B cell (primary cell): ENCODE measurements at regions of chr11 and their contacts with region 1.

Region 1: GRCh38 chr11:59207988-59208451 is 4.7 kb downstream of the MPEG1 start:
- DNase-seq: peak; percentile 84
- ATAC-seq: peak; percentile 68
- H3K4me3 ChIP-seq: peak overlapping the region; percentile 49 to 91 (median 73)
- H3K4me3 Mint-ChIP-seq: peak overlapping the region; percentile 95
- H3K27ac ChIP-seq: peak overlapping the region; percentile 64 to 89
- H3K27ac Mint-ChIP-seq: peak overlapping the region; percentile 95
- H3K4me1 ChIP-seq: peaks cover 61 to 68% of the 10 kb centered on the region in 2 donors
- H3K4me1 Mint-ChIP-seq: peaks cover 93% of the 10 kb centered on the region
- H3K27me3 ChIP-seq: no peaks in the 10 kb centered on the region
- H3K27me3 Mint-ChIP-seq: no peaks in the 10 kb centered on the region
- CTCF ChIP-seq: peak; percentile 82

Region 2: DNA sequence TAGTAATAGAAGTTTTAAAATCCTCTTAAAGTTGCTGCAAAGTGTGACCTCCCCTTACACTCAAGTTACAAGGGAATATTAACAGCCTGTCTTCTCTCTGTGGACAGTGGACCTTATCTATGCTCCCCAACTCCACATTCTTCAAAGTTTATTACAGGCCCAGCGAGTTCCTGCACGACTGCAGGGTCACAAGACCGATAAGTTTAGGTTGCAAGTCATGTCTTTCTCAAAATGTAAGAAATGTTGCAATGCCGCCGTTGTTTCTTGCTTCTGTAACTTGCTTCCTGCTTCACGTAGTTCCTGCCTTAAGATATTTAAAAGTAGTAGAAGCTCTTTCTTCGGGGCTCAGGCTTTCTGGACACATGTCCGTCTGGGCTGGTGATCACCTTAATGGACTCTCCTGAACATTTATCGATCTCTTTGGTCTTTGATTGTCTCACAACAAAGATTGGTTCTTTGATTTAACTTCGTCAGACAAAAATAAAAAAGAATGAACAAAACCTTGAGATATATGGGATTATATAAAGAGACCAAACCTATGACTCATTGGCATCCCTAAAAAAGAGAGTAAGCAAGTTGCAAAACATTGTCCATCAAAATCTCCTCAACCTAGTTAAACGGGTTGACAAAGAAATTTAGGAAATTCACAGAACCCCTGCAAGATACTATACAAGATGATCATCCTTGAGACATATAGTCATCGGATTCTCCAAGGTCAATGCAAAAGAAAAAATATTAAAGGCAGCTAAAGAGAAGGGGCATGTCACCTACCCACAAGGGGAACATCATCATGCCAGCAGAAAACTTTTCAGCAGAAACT is 430.9 kb before region 1 on chr11:
- CTCF ChIA-PET with region 1: no interaction called
- POLR2A ChIA-PET with region 1: no interaction called
- intact Hi-C with region 1: no loop called
- DNase-seq: no peak
- ATAC-seq: no peak
- H3K4me3 ChIP-seq: no peak overlapping the region
- H3K4me3 Mint-ChIP-seq: no peak overlapping the region
- H3K27ac ChIP-seq: no peak overlapping the region
- H3K27ac Mint-ChIP-seq: no peak overlapping the region
- H3K4me1 ChIP-seq: no peaks in the 10 kb centered on the region
- H3K4me1 Mint-ChIP-seq: no peaks in the 10 kb centered on the region
- H3K27me3 ChIP-seq: no peaks in the 10 kb centered on the region
- H3K27me3 Mint-ChIP-seq: peaks cover 14% of the 10 kb centered on the region
- CTCF ChIP-seq: no peak

Region 3: DNA sequence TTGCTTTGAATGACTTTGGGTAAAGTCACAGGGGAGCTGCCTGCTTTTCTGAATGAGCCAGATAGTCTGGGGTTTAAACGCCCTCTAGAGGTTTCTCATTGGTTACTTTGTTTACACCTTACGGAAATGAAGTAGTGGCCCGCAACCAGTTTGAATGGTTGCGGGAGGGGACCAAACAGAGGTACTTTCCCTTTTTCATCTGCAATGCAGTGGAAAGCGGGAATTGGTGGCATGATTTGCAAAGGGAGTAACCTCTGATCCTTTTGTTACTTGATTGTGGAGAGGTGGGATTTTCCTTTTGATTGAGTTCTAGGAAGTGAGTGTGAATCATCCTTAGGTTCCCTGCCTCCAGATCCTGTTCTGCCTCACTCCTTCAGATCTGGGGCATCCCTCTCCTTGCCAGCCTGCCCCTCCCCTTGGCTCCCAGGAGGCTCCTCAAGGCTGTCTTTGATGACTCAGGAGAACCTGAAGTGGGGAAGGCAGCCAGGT is 284.7 kb before region 1 on chr11:
- CTCF ChIA-PET with region 1: no interaction called
- POLR2A ChIA-PET with region 1: no interaction called
- intact Hi-C with region 1: no loop called
- DNase-seq: peak; percentile 51
- ATAC-seq: peak; percentile 76
- H3K4me3 ChIP-seq: no peak overlapping the region
- H3K4me3 Mint-ChIP-seq: peak overlapping the region; percentile 38
- H3K27ac ChIP-seq: no peak overlapping the region
- H3K27ac Mint-ChIP-seq: no peak overlapping the region
- H3K4me1 ChIP-seq: peaks cover 18 to 19% of the 10 kb centered on the region in 2 donors
- H3K4me1 Mint-ChIP-seq: peaks cover 22% of the 10 kb centered on the region
- H3K27me3 ChIP-seq: peaks cover 0 to 6% (median 3%) of the 10 kb centered on the region in 4 experiments
- H3K27me3 Mint-ChIP-seq: peaks cover 8% of the 10 kb centered on the region
- CTCF ChIP-seq: peak; percentile 52

Region 4: GRCh38 chr11:59112494-59112893 is 95.5 kb before region 1 on chr11:
- CTCF ChIA-PET with region 1: no interaction called
- POLR2A ChIA-PET with region 1: no interaction called
- intact Hi-C with region 1: no loop called
- DNase-seq: no peak
- ATAC-seq: no peak
- H3K4me3 ChIP-seq: no peak overlapping the region
- H3K4me3 Mint-ChIP-seq: no peak overlapping the region
- H3K27ac ChIP-seq: no peak overlapping the region
- H3K27ac Mint-ChIP-seq: no peak overlapping the region
- H3K4me1 ChIP-seq: peaks cover 19 to 21% of the 10 kb centered on the region in 2 donors
- H3K4me1 Mint-ChIP-seq: peaks cover 41% of the 10 kb centered on the region
- H3K27me3 ChIP-seq: no peaks in the 10 kb centered on the region
- H3K27me3 Mint-ChIP-seq: no peaks in the 10 kb centered on the region
- CTCF ChIP-seq: no peak

Region 5: DNA sequence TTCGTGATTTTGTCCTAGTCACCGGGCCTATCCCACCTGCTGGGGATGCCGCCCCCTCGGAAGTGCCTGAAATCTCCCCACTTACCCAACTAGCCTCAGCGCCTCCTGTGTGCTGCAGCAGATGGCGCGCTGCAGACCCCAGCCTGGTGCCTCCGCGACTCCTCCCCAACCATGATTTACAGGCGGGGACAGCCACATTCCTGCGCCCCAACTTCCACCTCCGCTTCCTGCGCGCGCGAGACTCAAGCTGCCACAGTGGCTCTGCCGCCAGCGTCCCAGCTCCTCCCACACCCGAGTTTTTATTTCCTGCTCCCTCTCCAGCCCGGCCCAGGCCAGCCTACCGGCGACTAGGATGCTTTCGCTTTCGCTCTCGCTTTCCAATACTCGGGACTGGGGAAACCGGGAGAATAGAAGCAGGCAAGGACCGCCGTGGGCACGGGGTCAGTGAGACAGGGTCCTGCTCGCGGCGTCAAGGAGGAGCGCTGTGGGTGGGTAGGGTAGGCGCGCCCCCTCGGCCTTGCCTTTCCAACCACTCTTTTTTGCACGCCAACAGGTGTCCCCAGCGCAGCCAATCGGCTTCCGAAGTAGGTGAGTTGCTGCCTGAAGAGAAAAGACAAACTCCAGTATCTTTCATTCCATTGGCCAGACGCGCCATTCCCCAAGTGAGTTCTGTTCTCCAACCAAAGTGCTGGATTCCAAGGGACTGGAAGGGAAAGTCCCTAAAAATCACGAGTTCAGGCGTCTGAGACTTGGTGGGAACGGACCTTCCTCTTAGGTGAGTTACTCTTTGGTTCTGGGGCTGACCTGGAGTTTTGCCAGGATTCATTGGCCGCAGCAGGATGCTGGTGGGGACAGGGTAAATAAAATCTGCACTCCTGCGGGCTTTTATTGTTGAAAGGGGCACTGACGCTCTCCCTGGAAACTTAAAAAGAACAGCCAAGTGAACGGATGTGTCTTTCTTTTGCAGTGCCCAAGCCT is 65.2 kb before region 1 on chr11 and contains the start of gene FAM111A:
- CTCF ChIA-PET with region 1: interaction called, 3 read pairs
- POLR2A ChIA-PET with region 1: no interaction called
- intact Hi-C with region 1: loop called (anchors 2 kb)
- DNase-seq: peak; percentile 91
- ATAC-seq: peak; percentile 74
- H3K4me3 ChIP-seq: peak within 1 kb of the TSS; percentile 82 to 94 (median 89)
- H3K4me3 Mint-ChIP-seq: peak within 1 kb of the TSS; percentile 97
- H3K27ac ChIP-seq: peak within 1 kb of the TSS; percentile 88 to 90
- H3K27ac Mint-ChIP-seq: peak within 1 kb of the TSS; percentile 87
- H3K4me1 ChIP-seq: peaks cover 40 to 45% of the 10 kb centered on the region in 2 donors
- H3K4me1 Mint-ChIP-seq: peaks cover 68% of the 10 kb centered on the region
- H3K27me3 ChIP-seq: no peaks in the 10 kb centered on the region
- H3K27me3 Mint-ChIP-seq: no peaks in the 10 kb centered on the region
- CTCF ChIP-seq: no peak
- total RNA-seq, gene FAM111A: 120 and 126 TPM in 2 replicates

Region 6: DNA sequence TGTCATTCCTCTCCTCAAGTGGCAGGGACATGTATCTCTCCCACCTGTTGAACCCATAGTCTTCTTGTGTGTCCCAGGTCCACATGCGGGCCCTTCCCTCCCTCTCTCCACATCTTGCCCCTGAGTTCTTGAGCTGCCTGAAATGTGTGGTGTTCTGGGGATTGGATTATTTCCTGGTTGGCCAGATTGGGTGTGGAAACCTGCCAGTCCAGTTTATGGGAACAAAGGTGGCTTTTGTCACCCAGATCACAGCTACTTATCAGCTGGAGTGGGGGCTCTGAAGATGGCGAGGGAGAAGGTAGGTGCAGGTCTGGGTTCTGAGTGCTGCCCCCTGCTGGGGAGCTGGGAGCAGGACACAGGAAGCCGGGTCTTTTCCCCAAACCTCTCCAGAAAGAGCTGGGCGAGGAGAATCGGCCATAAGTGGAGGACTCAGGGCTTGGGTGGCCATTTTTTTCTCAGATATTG is 21.9 kb before region 1 on chr11:
- CTCF ChIA-PET with region 1: interaction called, 52 read pairs
- POLR2A ChIA-PET with region 1: no interaction called
- intact Hi-C with region 1: no loop called
- DNase-seq: peak; percentile 68
- ATAC-seq: peak; percentile 59
- H3K4me3 ChIP-seq: no peak overlapping the region
- H3K4me3 Mint-ChIP-seq: no peak overlapping the region
- H3K27ac ChIP-seq: no peak overlapping the region
- H3K27ac Mint-ChIP-seq: no peak overlapping the region
- H3K4me1 ChIP-seq: peaks cover 0 to 2% of the 10 kb centered on the region in 2 donors
- H3K4me1 Mint-ChIP-seq: peaks cover 20% of the 10 kb centered on the region
- H3K27me3 ChIP-seq: no peaks in the 10 kb centered on the region
- H3K27me3 Mint-ChIP-seq: no peaks in the 10 kb centered on the region
- CTCF ChIP-seq: peak; percentile 69

Region 7: DNA sequence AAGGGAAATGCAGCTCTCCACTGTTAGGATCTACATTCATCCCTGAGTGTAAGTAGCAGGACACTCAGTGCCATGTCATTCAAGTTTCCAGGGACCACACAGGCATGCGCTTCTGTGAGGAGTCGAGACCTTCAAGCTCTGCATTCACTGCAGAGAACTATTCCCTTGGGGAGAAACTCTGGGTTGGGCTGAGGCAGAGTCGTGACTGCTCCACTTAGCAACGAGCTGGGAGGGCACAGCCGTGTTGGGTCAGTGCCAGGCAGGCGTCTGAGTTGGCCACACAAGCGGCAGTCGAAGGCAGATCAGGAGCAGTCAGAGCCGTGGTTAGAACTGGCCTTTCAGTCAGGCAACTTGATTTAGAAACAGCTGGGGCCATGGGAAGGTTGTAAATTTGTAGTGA is 10.0 kb before region 1 on chr11:
- CTCF ChIA-PET with region 1: interaction called, 15 read pairs
- POLR2A ChIA-PET with region 1: interaction called, 3 read pairs
- intact Hi-C with region 1: no loop called
- DNase-seq: no peak
- ATAC-seq: no peak
- H3K4me3 ChIP-seq: no peak overlapping the region
- H3K4me3 Mint-ChIP-seq: peak overlapping the region; percentile 23
- H3K27ac ChIP-seq: no peak overlapping the region
- H3K27ac Mint-ChIP-seq: peak overlapping the region; percentile 72
- H3K4me1 ChIP-seq: peaks cover 47 to 50% of the 10 kb centered on the region in 2 donors
- H3K4me1 Mint-ChIP-seq: peaks cover 74% of the 10 kb centered on the region
- H3K27me3 ChIP-seq: no peaks in the 10 kb centered on the region
- H3K27me3 Mint-ChIP-seq: no peaks in the 10 kb centered on the region
- CTCF ChIP-seq: no peak

Region 8: DNA sequence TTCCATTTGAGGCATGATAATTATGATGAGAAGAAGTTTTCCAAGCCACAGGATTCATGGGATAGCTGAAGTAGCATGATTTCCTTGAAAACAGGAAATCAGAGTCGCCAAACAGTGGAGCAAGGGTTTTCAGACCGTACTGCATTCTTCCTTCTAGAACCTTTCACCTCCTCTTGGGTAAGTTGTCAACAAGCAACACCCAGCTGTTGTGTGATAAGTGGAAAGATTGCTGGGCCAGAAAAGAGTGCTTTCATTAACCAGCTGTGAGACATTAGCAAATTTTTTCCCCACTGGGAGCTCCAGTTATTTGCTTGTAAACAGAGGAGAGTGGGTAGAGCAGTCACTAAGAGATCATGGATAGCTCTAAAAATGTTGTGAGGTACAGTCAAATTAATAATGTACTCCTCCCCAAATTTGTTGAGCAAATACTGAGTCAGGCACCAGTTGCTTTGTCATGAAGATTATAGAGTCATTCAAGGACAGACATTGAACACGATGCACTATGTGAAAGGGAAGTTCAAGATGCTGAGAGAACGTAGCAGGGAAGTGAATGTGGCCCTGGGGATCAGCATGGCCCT is 16.4 kb after region 1 on chr11:
- CTCF ChIA-PET with region 1: interaction called, 48 read pairs
- POLR2A ChIA-PET with region 1: no interaction called
- intact Hi-C with region 1: loop called (anchors 2 kb)
- DNase-seq: peak; percentile 51
- ATAC-seq: peak; percentile 26
- H3K4me3 ChIP-seq: no peak overlapping the region
- H3K4me3 Mint-ChIP-seq: peak overlapping the region; percentile 4
- H3K27ac ChIP-seq: peak overlapping the region; percentile 46 to 63
- H3K27ac Mint-ChIP-seq: peak overlapping the region; percentile 56
- H3K4me1 ChIP-seq: peaks cover 57% of the 10 kb centered on the region in 2 donors
- H3K4me1 Mint-ChIP-seq: peaks cover 55% of the 10 kb centered on the region
- H3K27me3 ChIP-seq: no peaks in the 10 kb centered on the region
- H3K27me3 Mint-ChIP-seq: no peaks in the 10 kb centered on the region
- CTCF ChIP-seq: no peak

Region 9: GRCh38 chr11:59263225-59263894 is 55.3 kb after region 1 on chr11:
- CTCF ChIA-PET with region 1: interaction called, 10 read pairs
- POLR2A ChIA-PET with region 1: interaction called, 4 read pairs
- intact Hi-C with region 1: no loop called
- DNase-seq: peak; percentile 78
- ATAC-seq: peak; percentile 65
- H3K4me3 ChIP-seq: no peak overlapping the region
- H3K4me3 Mint-ChIP-seq: peak overlapping the region; percentile 50
- H3K27ac ChIP-seq: no peak overlapping the region
- H3K27ac Mint-ChIP-seq: peak overlapping the region; percentile 37
- H3K4me1 ChIP-seq: peaks cover 52 to 69% of the 10 kb centered on the region in 2 donors
- H3K4me1 Mint-ChIP-seq: peaks cover 68% of the 10 kb centered on the region
- H3K27me3 ChIP-seq: no peaks in the 10 kb centered on the region
- H3K27me3 Mint-ChIP-seq: no peaks in the 10 kb centered on the region
- CTCF ChIP-seq: peak; percentile 68

Region 10: GRCh38 chr11:59273373-59273841 is 65.4 kb after region 1 on chr11:
- CTCF ChIA-PET with region 1: interaction called, 32 read pairs
- POLR2A ChIA-PET with region 1: interaction called, 15 read pairs
- intact Hi-C with region 1: no loop called
- DNase-seq: peak; percentile 88
- ATAC-seq: peak; percentile 85
- H3K4me3 ChIP-seq: peak overlapping the region in 1 of 5 experiments; percentile 44
- H3K4me3 Mint-ChIP-seq: peak overlapping the region; percentile 83
- H3K27ac ChIP-seq: peak overlapping the region; percentile 90 to 94
- H3K27ac Mint-ChIP-seq: peak overlapping the region; percentile 95
- H3K4me1 ChIP-seq: peaks cover 76 to 85% of the 10 kb centered on the region in 2 donors
- H3K4me1 Mint-ChIP-seq: peaks cover 92% of the 10 kb centered on the region
- H3K27me3 ChIP-seq: no peaks in the 10 kb centered on the region
- H3K27me3 Mint-ChIP-seq: no peaks in the 10 kb centered on the region
- CTCF ChIP-seq: no peak